ENCODE measurements at regions of chr15 and their contacts with region 1.

Region 1: GRCh38 chr15:100602064-100602822 is at the starts of genes ASB7 and LINS1:
- DNase-seq: peak; percentile 100
- H3K4me3 Mint-ChIP-seq: no peak within 1 kb of the TSS
- H3K27ac Mint-ChIP-seq: no peak within 1 kb of the TSS
- H3K4me1 Mint-ChIP-seq: peaks cover 50% of the 10 kb centered on the region
- H3K27me3 Mint-ChIP-seq: no peaks in the 10 kb centered on the region
- total RNA-seq, gene ASB7: 18.0 and 19.9 TPM in 2 replicates
- total RNA-seq, gene LINS1: 39.2 and 46.8 TPM in 2 replicates

Region 2: DNA sequence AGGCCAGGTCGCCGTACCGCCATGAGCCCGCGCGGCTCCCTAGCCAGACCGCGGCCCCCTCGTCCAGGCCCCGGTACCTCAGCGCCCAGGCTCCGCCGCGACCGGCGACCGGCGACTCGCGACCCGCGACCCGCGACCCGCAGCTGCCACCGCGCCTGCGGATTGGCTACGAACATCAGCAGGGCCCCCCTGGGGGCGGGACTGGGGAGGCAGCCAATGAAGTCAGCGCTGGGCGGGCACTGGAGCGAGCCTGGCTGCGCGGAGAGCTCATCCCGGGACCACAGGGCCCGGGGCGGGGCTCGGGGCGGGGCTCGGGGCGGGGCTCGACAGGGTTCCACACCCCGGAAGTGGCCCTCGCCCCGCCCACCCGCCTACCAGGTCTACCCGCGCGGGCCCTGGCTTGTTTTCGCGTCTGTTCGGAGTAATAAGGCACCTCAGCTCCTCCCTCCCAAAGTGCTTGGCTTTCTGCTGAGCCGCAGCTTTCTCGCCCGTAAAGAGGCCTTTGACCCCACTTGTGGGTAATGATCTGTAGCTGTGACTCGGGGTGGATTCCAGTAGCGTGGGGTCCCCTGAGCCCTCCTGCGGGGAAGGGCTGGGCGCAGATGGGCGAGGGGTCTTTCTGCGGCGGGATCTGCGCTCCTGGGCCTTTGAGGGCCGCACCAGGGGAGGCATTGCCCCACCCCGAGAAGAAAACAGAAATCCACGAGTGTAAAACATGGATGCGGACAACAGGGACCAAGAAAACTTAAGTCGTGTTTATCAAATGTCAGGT is 868.8 kb before region 1 on chr15 and contains the start of gene LYSMD4:
- intact Hi-C with region 1: loop called (anchors 5 kb)
- DNase-seq: peak; percentile 96
- H3K4me3 Mint-ChIP-seq: peak within 1 kb of the TSS; percentile 76
- H3K27ac Mint-ChIP-seq: peak within 1 kb of the TSS; percentile 86
- H3K4me1 Mint-ChIP-seq: peaks cover 22% of the 10 kb centered on the region
- H3K27me3 Mint-ChIP-seq: no peaks in the 10 kb centered on the region
- total RNA-seq, gene LYSMD4: 6.8 and 7.6 TPM in 2 replicates

Region 3: GRCh38 chr15:101121511-101122090 is 519.4 kb after region 1 on chr15:
- intact Hi-C with region 1: loop called (anchors 5 kb)
- DNase-seq: no peak
- H3K4me3 Mint-ChIP-seq: peak overlapping the region; percentile 65
- H3K27ac Mint-ChIP-seq: peak overlapping the region; percentile 79
- H3K4me1 Mint-ChIP-seq: peaks cover 46% of the 10 kb centered on the region
- H3K27me3 Mint-ChIP-seq: no peaks in the 10 kb centered on the region

Region 4: GRCh38 chr15:101251830-101252820 is 649.9 kb after region 1 on chr15 and contains the start of gene CHSY1:
- intact Hi-C with region 1: loop called (anchors 5 kb)
- DNase-seq: peak; percentile 83
- H3K4me3 Mint-ChIP-seq: peak within 1 kb of the TSS; percentile 85
- H3K27ac Mint-ChIP-seq: peak within 1 kb of the TSS; percentile 84
- H3K4me1 Mint-ChIP-seq: peaks cover 57% of the 10 kb centered on the region
- H3K27me3 Mint-ChIP-seq: no peaks in the 10 kb centered on the region
- total RNA-seq, gene CHSY1: 50.5 and 52.2 TPM in 2 replicates